ENCODE measurements at regions of chr7 and their contacts with region 1.

Region 1: GRCh38 chr7:23570592-23571200 is 26.5 kb upstream of the CCDC126 start:
- DNase-seq: peak; percentile 40 to 56
- ATAC-seq: peak; percentile 83 to 87
- H3K4me3 ChIP-seq: no peak overlapping the region
- H3K27ac ChIP-seq: no peak overlapping the region
- H3K4me1 ChIP-seq: no peaks in the 10 kb centered on the region
- H3K27me3 ChIP-seq: no peaks in the 10 kb centered on the region
- CTCF ChIP-seq: peak; percentile 73 to 87 (median 77)
- POLR2A ChIP-seq: no peak

Region 2: DNA sequence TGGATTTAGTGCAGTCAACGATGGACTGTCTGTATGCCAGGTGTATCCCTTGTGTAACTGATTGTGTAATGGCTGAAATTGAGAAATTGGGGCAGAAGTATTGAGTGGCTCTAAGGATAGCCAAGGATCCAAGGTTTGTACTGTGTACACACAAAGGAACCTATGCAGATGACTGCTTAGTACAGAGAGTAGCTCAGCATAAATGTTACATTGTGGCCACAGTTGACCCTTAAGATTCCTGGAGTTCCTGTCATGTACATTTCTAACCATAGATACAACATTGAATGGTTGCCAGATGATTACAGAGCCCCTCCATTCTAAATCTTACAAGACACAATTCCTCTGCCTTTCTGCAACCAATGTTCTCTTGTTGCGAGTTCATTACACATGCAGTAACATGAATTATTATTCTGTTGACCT is 51.8 kb after region 1 on chr7:
- in situ Hi-C with region 1: no loop called
- intact Hi-C with region 1: loop called (anchors 2 kb)
- DNase-seq: peak in 1 of 2 donors; percentile 13
- ATAC-seq: peak; percentile 95 to 97
- H3K4me3 ChIP-seq: no peak overlapping the region
- H3K27ac ChIP-seq: peak overlapping the region in 2 of 4 donors; percentile 53 to 64
- H3K4me1 ChIP-seq: peaks cover 0 to 3% of the 10 kb centered on the region in 2 donors
- H3K27me3 ChIP-seq: no peaks in the 10 kb centered on the region
- CTCF ChIP-seq: no peak
- POLR2A ChIP-seq: no peak

Region 3: DNA sequence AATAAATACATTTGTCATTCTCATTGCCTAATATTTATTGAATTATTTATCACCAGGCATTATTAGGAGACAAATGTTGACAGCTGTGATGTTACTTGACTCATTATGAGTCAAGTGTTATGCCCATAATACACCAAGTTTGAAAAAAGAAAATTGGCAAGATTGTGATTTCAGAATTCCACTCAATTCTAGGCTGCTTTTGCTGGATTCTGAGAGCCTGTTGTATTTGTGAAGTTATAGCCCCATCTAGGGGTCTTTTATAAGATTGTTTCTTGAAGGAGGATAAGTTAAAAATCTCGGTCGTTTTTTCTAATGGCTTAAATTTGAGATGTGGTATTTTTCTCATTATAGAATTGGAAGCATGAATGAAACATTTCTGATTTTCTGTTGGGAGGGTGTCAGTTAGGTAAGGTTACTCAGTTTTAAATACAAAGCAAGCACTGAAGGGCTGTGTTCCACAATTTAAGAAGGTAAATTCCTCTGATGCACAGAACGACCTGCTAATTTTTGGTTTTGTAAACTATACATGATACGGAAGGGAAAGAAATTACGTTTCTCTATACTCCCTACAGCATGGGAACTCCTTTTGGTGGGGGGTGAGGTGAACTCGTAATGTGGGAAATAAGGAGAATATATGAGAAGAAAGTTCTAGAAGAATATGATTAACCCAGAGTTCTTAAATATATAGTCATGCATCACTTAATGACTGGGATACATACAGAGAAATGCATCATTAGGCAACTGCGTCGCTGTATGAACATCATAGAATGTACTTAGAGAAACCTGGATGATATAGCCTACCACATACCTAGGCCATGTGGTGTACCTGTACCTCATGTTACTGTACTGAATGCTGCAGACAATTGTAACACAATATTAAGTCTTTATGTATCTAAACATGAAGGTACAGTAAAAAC is 141.9 kb after region 1 on chr7:
- in situ Hi-C with region 1: loop called (anchors 5 kb)
- intact Hi-C with region 1: loop called (anchors 1 kb)
- DNase-seq: no peak
- ATAC-seq: peak; percentile 65 to 68
- H3K4me3 ChIP-seq: no peak overlapping the region
- H3K27ac ChIP-seq: no peak overlapping the region
- H3K4me1 ChIP-seq: no peaks in the 10 kb centered on the region
- H3K27me3 ChIP-seq: no peaks in the 10 kb centered on the region
- CTCF ChIP-seq: peak; percentile 53 to 70 (median 68)
- POLR2A ChIP-seq: no peak